ENCODE measurements at regions of chr5 and their contacts with region 1.

Region 1: DNA sequence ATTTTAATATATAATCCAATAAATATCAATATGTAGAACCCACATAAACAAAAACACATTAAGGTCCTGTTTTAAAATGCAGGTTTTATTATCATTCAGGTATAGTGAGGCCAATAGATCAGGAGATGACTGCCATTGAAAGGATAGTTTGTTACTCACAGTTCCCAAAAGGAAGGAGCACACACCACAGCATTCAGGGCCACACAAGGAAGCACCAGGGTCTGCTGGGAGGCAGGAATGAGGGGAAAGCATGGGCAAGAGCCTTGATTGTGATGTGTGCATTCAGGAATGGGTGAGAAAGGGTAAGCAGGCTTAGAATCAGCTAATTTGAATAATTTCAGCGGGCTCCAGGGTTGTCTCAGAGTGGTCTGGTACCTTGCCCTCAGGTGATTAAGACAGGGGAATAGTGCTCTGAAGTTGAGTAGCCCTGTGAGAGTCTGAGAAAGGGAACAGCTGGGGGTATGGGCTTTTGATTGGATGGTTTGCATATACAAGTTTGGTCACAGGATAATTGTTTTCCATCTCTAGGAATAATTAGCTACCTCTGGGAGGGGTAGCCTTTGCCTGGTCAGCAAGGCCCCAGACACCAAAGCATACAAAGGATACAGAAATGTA is 19.8 kb upstream of the OTULIN start:
- DNase-seq: no peak
- H3K4me3 ChIP-seq: no peak overlapping the region
- H3K27ac ChIP-seq: no peak overlapping the region
- H3K4me1 ChIP-seq: peaks cover 0 to 9% (median 2%) of the 10 kb centered on the region in 6 donors
- H3K27me3 ChIP-seq: peaks cover 0 to 10% (median 0%) of the 10 kb centered on the region in 7 donors
- CTCF ChIP-seq: no peak
- POLR2A ChIP-seq: no peak

Region 2: DNA sequence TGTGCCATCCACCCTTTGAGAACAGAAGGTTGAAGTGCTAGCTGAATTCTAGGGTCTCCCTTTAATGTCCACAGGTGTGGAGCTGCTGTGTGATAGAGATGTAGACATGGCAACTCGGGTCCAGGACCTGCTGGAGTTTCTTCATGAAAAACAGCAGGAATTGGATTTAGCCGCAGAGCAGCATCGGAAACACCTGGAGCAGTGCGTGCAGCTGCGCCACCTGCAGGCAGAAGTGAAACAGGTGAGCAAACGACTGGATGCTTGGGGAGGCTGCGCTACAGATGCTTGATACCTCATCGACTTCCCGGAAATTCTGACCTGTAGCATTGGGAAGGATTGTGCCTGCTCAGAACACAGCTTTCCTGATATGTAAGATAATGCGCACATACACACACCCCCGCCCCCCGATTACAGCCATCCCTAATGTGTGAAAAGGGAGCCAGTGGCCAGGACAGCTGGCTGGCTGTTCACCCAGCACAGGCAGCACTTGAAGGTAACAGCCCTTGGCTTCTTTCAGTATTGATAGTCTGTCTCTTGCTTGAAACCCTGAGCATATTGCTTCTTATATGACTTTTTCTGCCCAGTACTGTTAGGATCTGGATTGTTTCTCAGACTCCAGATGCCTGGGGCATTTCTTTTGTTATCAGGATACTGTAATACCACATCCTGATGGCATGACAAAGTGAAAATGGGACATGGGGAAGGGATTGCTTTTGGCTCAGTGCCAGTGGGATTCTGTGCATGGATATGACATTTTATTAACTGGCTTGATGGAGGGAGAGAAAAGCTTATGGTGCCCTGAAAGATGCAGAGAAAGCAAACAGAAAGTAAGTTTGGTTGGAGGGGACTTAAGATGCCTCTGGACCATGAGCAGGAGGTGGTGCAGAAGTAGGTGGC is 279.9 kb before region 1 on chr5:
- intact Hi-C with region 1: loop called (anchors 10 kb)
- DNase-seq: no peak
- H3K4me3 ChIP-seq: no peak overlapping the region
- H3K27ac ChIP-seq: no peak overlapping the region
- H3K4me1 ChIP-seq: peaks cover 0 to 13% (median 0%) of the 10 kb centered on the region in 6 donors
- H3K27me3 ChIP-seq: no peaks in the 10 kb centered on the region
- CTCF ChIP-seq: peak in 6 of 11 experiments; percentile 22 to 47 (median 46)
- POLR2A ChIP-seq: no peak

Region 3: DNA sequence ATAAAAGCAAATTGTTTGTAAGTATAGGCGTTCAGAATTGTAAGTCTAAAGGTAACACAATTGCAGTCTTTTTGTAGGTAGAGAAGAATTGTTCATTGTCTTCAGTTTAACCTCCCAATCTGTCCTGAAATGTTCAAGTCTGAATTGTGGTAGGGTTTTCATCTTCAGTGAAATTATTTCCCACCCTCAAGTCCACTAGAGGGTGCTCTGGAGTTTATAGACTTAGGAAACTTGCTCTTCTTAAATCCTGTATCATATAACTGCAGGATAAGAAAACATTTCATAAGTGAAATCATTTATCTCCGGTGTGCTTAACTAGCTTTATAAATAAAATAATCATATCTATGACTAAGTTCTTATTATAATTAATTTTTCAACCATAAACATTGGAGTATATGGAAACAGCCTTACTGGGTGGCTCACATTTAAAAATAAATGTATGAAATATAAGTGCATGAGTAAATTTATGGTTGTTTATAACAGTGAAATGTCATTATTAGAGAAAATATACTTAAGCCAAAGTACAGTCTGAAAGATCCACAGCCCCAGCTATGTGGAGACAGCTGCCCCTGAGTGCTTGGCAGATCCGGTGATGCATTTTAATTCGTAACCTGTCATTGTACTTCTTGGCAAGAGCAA is 245.6 kb before region 1 on chr5:
- intact Hi-C with region 1: loop called (anchors 2 kb)
- DNase-seq: no peak
- H3K4me3 ChIP-seq: no peak overlapping the region
- H3K27ac ChIP-seq: no peak overlapping the region
- H3K4me1 ChIP-seq: peaks cover 0 to 37% (median 14%) of the 10 kb centered on the region in 6 donors
- H3K27me3 ChIP-seq: no peaks in the 10 kb centered on the region
- CTCF ChIP-seq: peak in 9 of 11 experiments; percentile 23 to 72 (median 56)
- POLR2A ChIP-seq: no peak

Measured in spleen (tissue), 13 donors.